CD14-positive monocyte (primary cell): ENCODE measurements at regions of chr16 and their contacts with region 1.

Region 1: GRCh38 chr16:85610508-85611332 is 2.4 kb upstream of the GSE1 start:
- DNase-seq: peak; percentile 83 to 89 (median 85)
- H3K4me3 ChIP-seq: peak overlapping the region in 2 of 3 experiments; percentile 28 to 84
- H3K4me3 Mint-ChIP-seq: peak overlapping the region; percentile 67 to 82
- H3K27ac ChIP-seq: no peak overlapping the region
- H3K27ac Mint-ChIP-seq: peak overlapping the region in 3 of 7 donors; percentile 58 to 86 (median 73)
- H3K4me1 ChIP-seq: peaks cover 46 to 74% of the 10 kb centered on the region in 2 donors
- H3K4me1 Mint-ChIP-seq: peaks cover 49% of the 10 kb centered on the region
- H3K27me3 ChIP-seq: no peaks in the 10 kb centered on the region
- H3K27me3 Mint-ChIP-seq: peaks cover 4 to 13% (median 7%) of the 10 kb centered on the region in 3 donors
- CTCF ChIP-seq: peak; percentile 99

Region 2: GRCh38 chr16:85305996-85306792 is 304.5 kb before region 1 on chr16:
- intact Hi-C with region 1: loop called (anchors 10 kb)
- DNase-seq: peak; percentile 95 to 97 (median 96)
- H3K4me3 ChIP-seq: peak overlapping the region in 1 of 3 experiments; percentile 10
- H3K4me3 Mint-ChIP-seq: peak overlapping the region; percentile 43 to 63
- H3K27ac ChIP-seq: peak overlapping the region; percentile 31 to 75
- H3K27ac Mint-ChIP-seq: peak overlapping the region; percentile 69 to 91 (median 82)
- H3K4me1 ChIP-seq: peaks cover 75 to 82% of the 10 kb centered on the region in 2 donors
- H3K4me1 Mint-ChIP-seq: peaks cover 68% of the 10 kb centered on the region
- H3K27me3 ChIP-seq: peaks cover 0 to under 1% of the 10 kb centered on the region in 2 donors
- H3K27me3 Mint-ChIP-seq: peaks cover 5 to 8% (median 7%) of the 10 kb centered on the region in 3 donors
- CTCF ChIP-seq: no peak

Region 3: GRCh38 chr16:85420501-85421337 is 190.0 kb before region 1 on chr16:
- intact Hi-C with region 1: loop called (anchors 5 kb)
- DNase-seq: peak; percentile 63 to 77 (median 67)
- H3K4me3 ChIP-seq: no peak overlapping the region
- H3K4me3 Mint-ChIP-seq: no peak overlapping the region
- H3K27ac ChIP-seq: no peak overlapping the region
- H3K27ac Mint-ChIP-seq: peak overlapping the region in 2 of 7 donors; percentile 2 to 43
- H3K4me1 ChIP-seq: peaks cover 0 to 4% of the 10 kb centered on the region in 2 donors
- H3K4me1 Mint-ChIP-seq: peaks cover 7% of the 10 kb centered on the region
- H3K27me3 ChIP-seq: no peaks in the 10 kb centered on the region
- H3K27me3 Mint-ChIP-seq: peaks cover 6 to 18% (median 7%) of the 10 kb centered on the region in 3 donors
- CTCF ChIP-seq: peak; percentile 100

Region 4: GRCh38 chr16:85569615-85570212 is 41.0 kb before region 1 on chr16:
- intact Hi-C with region 1: loop called (anchors 2 to 5 kb)
- DNase-seq: peak in 2 of 3 donors; percentile 17 to 20
- H3K4me3 ChIP-seq: peak overlapping the region in 1 of 3 experiments; percentile 58
- H3K4me3 Mint-ChIP-seq: peak overlapping the region; percentile 70 to 80
- H3K27ac ChIP-seq: peak overlapping the region; percentile 85 to 94
- H3K27ac Mint-ChIP-seq: peak overlapping the region; percentile 94 to 97 (median 95)
- H3K4me1 ChIP-seq: peaks cover 77 to 89% of the 10 kb centered on the region in 2 donors
- H3K4me1 Mint-ChIP-seq: peaks cover 93% of the 10 kb centered on the region
- H3K27me3 ChIP-seq: no peaks in the 10 kb centered on the region
- H3K27me3 Mint-ChIP-seq: peaks cover 1 to 3% (median 2%) of the 10 kb centered on the region in 3 donors
- CTCF ChIP-seq: no peak

Region 5: DNA sequence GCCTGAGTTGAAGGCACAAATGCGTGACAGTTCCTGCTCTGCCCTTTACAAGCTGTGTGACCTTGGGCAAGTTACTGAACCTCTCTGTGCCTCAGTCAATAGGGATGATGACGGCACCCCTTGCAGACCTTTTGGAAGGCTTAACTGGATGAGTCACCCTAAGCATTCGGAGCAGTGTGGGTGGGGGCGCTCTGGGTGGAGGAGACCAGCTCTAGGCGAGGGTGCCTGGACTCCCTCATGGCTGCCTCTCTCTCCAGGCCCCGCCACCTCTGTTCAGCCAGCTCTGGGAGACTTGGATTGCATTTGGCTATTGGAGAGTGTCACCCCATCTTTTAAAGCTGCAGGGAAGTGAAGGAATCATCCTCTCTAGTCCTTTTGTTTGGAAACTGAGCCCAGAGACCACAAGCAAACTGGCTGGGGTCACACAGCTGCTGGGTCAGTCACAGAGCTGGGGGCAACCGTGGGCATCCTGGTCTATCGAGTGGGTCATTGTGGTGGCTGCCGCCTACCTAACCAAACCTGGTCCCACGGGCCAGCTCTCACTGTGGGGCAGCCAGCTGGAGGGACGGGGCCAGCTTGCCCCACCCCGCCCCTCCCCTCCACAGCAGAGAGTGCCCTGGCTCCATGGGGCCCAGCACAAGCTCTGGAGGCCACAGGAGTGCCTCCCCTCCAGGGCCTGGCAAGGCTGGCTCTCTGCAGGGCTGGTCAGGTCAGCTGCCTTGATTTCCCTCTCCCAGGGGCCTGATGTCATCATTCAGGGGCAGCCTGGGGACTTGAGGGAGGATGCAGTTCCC is 17.8 kb before region 1 on chr16:
- intact Hi-C with region 1: no loop called
- DNase-seq: no peak
- H3K4me3 ChIP-seq: no peak overlapping the region
- H3K4me3 Mint-ChIP-seq: no peak overlapping the region
- H3K27ac ChIP-seq: no peak overlapping the region
- H3K27ac Mint-ChIP-seq: peak overlapping the region in 1 of 7 donors; percentile 31
- H3K4me1 ChIP-seq: no peaks in the 10 kb centered on the region
- H3K4me1 Mint-ChIP-seq: peaks cover 7% of the 10 kb centered on the region
- H3K27me3 ChIP-seq: no peaks in the 10 kb centered on the region
- H3K27me3 Mint-ChIP-seq: no peaks in the 10 kb centered on the region
- CTCF ChIP-seq: no peak

Region 6: DNA sequence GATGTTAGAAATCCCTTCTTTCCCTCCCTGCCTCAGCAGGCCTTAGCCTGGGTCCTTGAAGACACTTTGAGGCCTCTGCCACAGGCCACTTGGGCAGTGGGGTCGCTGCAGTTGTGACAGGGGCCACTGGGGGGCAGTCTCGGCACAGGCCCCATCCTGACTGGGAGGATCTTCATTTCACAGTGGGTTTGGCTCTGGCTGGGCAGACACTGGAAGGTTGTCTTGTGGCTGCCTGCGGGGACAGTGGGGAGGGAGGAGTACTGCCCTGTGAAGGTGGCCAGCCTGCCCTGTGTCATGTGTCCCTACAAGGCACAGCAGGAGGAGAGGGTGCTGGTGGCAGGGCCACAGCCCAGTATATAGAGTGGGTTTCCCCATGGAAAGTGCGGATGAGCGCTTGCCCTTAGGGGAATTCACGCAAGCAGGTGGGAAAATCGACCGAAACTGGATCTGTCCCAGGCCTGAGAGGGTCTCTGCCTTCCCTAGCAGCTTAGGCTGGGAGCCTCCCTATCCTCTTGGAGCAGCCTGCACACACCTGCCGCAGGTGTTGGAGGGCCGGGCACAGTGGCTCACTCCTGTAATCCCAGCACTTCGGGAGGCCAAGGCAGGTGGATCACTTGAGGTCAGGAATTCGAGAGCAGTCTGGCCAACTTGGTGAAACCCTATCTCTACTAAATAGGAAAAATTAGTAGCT is 49.2 kb after region 1 on chr16:
- intact Hi-C with region 1: no loop called
- DNase-seq: peak; percentile 25 to 43 (median 36)
- H3K4me3 ChIP-seq: no peak overlapping the region
- H3K4me3 Mint-ChIP-seq: no peak overlapping the region
- H3K27ac ChIP-seq: no peak overlapping the region
- H3K27ac Mint-ChIP-seq: peak overlapping the region in 4 of 7 donors; percentile 3 to 59 (median 34)
- H3K4me1 ChIP-seq: no peaks in the 10 kb centered on the region
- H3K4me1 Mint-ChIP-seq: no peaks in the 10 kb centered on the region
- H3K27me3 ChIP-seq: no peaks in the 10 kb centered on the region
- H3K27me3 Mint-ChIP-seq: no peaks in the 10 kb centered on the region
- CTCF ChIP-seq: peak; percentile 92

Region 7: GRCh38 chr16:85699628-85700027 is 88.9 kb after region 1 on chr16:
- intact Hi-C with region 1: no loop called
- DNase-seq: no peak
- H3K4me3 ChIP-seq: no peak overlapping the region
- H3K4me3 Mint-ChIP-seq: no peak overlapping the region
- H3K27ac ChIP-seq: no peak overlapping the region
- H3K27ac Mint-ChIP-seq: no peak overlapping the region
- H3K4me1 ChIP-seq: no peaks in the 10 kb centered on the region
- H3K4me1 Mint-ChIP-seq: peaks cover 12% of the 10 kb centered on the region
- H3K27me3 ChIP-seq: peaks cover 0 to 4% of the 10 kb centered on the region in 2 donors
- H3K27me3 Mint-ChIP-seq: peaks cover 6 to 15% (median 10%) of the 10 kb centered on the region in 3 donors
- CTCF ChIP-seq: no peak